Right ventricle myocardium inferior (tissue), 1 donor: ENCODE measurements at regions of chr5 and their contacts with region 1.

Region 1: GRCh38 chr5:102583276-102584124 is 84.7 kb upstream of the SLCO6A1 start:
- DNase-seq: no peak
- ATAC-seq: no peak

Region 2: GRCh38 chr5:102536323-102536928 is 47.1 kb before region 1 on chr5:
- intact Hi-C with region 1: no loop called
- DNase-seq: no peak
- ATAC-seq: no peak

Region 3: DNA sequence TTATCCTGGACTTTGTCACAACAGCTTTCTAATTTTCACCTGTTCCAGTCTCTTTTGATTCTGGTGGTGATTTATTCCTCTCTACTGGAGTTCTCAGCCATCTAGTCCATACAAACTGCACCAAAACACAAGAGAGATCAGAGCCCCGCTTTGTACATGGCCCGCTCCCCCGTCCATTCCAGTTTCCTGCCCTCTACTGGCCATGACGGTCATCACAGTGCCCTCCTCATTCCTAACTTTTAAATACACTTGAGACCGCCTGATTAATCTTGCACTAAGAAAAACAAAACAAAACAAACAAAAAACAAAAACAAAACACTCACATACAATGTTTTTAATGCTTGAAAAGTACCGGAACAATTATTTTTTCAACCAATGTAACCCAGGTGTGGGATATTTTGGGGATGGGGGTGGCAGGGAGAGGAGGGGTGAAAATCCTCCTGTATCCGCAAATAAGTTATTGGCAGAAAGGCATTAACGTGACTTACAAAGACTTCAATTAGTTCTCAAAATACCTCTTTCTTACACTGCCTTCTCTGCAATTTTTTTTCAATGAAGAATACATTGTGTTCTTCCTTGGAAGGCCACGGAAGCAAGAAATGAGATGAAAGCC is 86.8 kb after region 1 on chr5:
- intact Hi-C with region 1: loop called (anchors 1 kb)
- DNase-seq: no peak
- ATAC-seq: no peak

Region 4: GRCh38 chr5:102754767-102755431 is 171.4 kb after region 1 on chr5 and contains the start of gene PAM:
- intact Hi-C with region 1: loop called (anchors 10 kb)
- DNase-seq: peak; percentile 92
- ATAC-seq: peak; percentile 94
- total RNA-seq, gene PAM: 959 TPM

Region 5: GRCh38 chr5:103041071-103041676 is 457.7 kb after region 1 on chr5:
- intact Hi-C with region 1: loop called (anchors 2 kb)
- DNase-seq: no peak
- ATAC-seq: no peak

Region 6: GRCh38 chr5:103139264-103139865 is 555.9 kb after region 1 on chr5:
- intact Hi-C with region 1: loop called (anchors 10 kb)
- DNase-seq: peak; percentile 79
- ATAC-seq: peak; percentile 85